ENCODE measurements at regions of chr21 and their contacts with region 1.

Region 1: DNA sequence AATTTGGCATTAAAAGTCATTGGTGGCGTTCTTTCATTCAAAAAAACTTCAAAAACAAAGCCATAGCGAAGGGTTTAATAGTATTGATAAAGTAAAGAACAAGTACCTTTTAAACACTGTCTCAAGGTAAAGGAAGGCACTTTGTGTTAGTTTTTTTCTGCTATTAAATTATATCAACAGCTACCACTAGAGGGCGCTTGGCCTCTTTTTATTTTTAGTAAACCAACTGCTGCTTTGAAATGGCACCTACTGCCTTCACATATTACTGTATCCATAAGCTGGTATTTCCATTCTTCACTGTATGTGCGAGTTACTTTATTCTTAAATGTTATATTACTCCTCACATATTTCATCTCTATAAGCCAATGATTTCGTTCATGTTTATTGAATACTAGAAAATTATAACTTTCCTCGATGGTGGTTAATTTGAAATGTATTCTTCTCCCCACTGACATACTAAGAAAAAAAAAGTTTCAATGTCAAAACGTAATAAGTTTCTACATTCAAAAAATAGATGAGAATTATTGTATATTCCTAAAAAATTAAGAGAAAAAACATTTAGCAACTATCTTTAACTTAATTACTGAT is 125.7 kb upstream of the CXADR start:
- DNase-seq: no peak
- ATAC-seq: no peak
- H3K4me3 ChIP-seq: no peak overlapping the region
- H3K27ac ChIP-seq: no peak overlapping the region
- H3K4me1 ChIP-seq: no peaks in the 10 kb centered on the region
- H3K27me3 ChIP-seq: no peaks in the 10 kb centered on the region

Region 2: DNA sequence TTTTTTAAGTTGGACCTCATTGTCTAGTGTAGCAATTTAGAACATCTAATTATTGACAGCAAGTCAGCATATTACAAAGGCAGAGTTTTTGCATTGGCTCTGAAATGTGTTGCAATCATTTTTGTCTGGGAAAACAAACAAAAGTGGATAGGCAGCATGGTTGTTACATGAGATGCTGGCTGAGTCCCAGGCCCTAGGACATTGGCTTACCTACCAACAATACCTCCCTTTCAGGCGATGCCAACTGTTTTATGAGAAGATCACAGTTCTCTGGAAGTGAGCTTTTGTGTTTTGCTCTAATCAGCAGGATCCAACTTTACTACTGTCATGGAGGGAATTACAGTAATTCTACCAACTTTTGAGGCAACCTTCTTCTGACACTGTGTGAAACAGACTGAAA is 54.2 kb after region 1 on chr21:
- intact Hi-C with region 1: no loop called
- DNase-seq: no peak
- ATAC-seq: peak; percentile 33
- H3K4me3 ChIP-seq: no peak overlapping the region
- H3K27ac ChIP-seq: no peak overlapping the region
- H3K4me1 ChIP-seq: peaks cover 0 to 3% of the 10 kb centered on the region in 2 donors
- H3K27me3 ChIP-seq: no peaks in the 10 kb centered on the region

Region 3: GRCh38 chr21:17583898-17584297 is 196.8 kb after region 1 on chr21:
- intact Hi-C with region 1: loop called (anchors 2 to 5 kb)
- DNase-seq: no peak
- ATAC-seq: no peak
- H3K4me3 ChIP-seq: no peak overlapping the region
- H3K27ac ChIP-seq: no peak overlapping the region
- H3K4me1 ChIP-seq: no peaks in the 10 kb centered on the region
- H3K27me3 ChIP-seq: no peaks in the 10 kb centered on the region

Measured in aorta (tissue), 5 donors.